ENCODE measurements at regions of chr12 and their contacts with region 1.

Region 1: GRCh38 chr12:13347241-13348043 is 150.9 kb downstream of the EMP1 start:
- DNase-seq: no peak
- ATAC-seq: no peak
- H3K4me3 ChIP-seq: no peak overlapping the region
- H3K4me3 Mint-ChIP-seq: no peak overlapping the region
- H3K27ac ChIP-seq: no peak overlapping the region
- H3K27ac Mint-ChIP-seq: no peak overlapping the region
- H3K4me1 ChIP-seq: no peaks in the 10 kb centered on the region
- H3K4me1 Mint-ChIP-seq: no peaks in the 10 kb centered on the region
- H3K27me3 ChIP-seq: no peaks in the 10 kb centered on the region
- H3K27me3 Mint-ChIP-seq: peaks cover 38% of the 10 kb centered on the region
- CTCF ChIP-seq: no peak

Region 2: DNA sequence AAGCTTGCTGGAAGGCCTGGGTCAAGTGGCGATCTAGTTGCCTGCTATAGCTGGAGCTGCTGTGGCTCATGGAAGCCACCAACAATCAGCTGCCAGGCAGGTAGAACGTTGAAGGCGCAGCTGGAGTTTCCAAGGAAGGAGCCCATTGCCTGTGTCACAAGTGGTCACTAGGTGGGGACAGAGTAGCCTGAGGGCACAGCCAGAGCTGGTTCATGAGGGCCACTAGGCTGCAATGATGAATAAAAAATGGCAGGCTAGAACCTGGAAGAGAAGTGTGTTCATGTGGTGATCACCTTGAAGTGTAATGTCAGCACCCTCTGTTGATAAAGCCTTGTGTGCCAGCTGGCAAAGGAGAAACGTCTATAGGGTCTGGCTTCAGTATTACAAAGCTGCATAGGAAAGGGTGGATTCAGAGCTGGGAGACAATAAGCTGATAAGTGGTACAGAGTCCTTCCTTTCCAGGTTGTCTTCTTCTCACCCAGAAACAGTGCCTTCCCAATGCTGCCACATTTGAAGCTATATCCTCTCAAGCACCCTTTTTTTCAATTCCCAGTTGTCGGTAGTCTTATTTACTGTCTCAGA is 14.9 kb after region 1 on chr12:
- CTCF ChIA-PET with region 1: interaction called, 10 read pairs
- POLR2A ChIA-PET with region 1: no interaction called
- intact Hi-C with region 1: no loop called
- DNase-seq: peak in 6 of 9 experiments; percentile 8 to 40 (median 15)
- ATAC-seq: no peak
- H3K4me3 ChIP-seq: no peak overlapping the region
- H3K4me3 Mint-ChIP-seq: no peak overlapping the region
- H3K27ac ChIP-seq: no peak overlapping the region
- H3K27ac Mint-ChIP-seq: no peak overlapping the region
- H3K4me1 ChIP-seq: no peaks in the 10 kb centered on the region
- H3K4me1 Mint-ChIP-seq: no peaks in the 10 kb centered on the region
- H3K27me3 ChIP-seq: no peaks in the 10 kb centered on the region
- H3K27me3 Mint-ChIP-seq: peaks cover 11% of the 10 kb centered on the region
- CTCF ChIP-seq: peak; percentile 39